OCI-LY7 (cell line): ENCODE measurements at regions of chr12 and their contacts with region 1.

Region 1: GRCh38 chr12:92561543-92561899 is 141.3 kb upstream of the PLEKHG7 start:
- DNase-seq: no peak
- H3K4me3 ChIP-seq: no peak overlapping the region
- H3K27ac ChIP-seq: no peak overlapping the region
- H3K4me1 ChIP-seq: peaks cover 10% of the 10 kb centered on the region
- CTCF ChIP-seq: no peak

Region 2: DNA sequence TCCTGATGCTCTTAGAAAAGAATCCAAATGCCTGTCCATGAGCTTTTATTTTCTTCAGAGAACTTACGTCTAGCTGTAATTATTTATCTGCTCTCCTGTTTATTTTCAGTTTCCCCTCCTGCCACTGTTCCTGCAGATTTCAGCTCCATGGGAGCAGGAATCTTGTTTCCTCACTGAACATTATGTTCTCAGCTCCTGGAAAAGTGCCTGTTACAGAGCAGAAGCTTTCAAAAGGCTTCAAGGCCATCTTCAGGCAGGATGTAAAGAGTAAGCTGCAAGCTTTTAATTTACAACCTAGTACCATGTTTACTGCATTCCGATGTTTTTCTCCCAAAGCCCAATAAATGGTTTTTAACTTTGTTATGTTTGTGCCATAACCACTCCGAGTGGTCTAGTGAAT is 317.5 kb before region 1 on chr12:
- CTCF ChIA-PET with region 1: no interaction called
- POLR2A ChIA-PET with region 1: no interaction called
- intact Hi-C with region 1: no loop called
- DNase-seq: no peak
- H3K4me3 ChIP-seq: no peak overlapping the region
- H3K27ac ChIP-seq: no peak overlapping the region
- H3K4me1 ChIP-seq: no peaks in the 10 kb centered on the region
- CTCF ChIP-seq: no peak

Region 3: GRCh38 chr12:92485351-92486348 is 75.9 kb before region 1 on chr12:
- CTCF ChIA-PET with region 1: no interaction called
- POLR2A ChIA-PET with region 1: interaction called, 10 read pairs
- intact Hi-C with region 1: no loop called
- DNase-seq: no peak
- H3K4me3 ChIP-seq: no peak overlapping the region
- H3K27ac ChIP-seq: peak overlapping the region; percentile 26
- H3K4me1 ChIP-seq: peaks cover 45% of the 10 kb centered on the region
- CTCF ChIP-seq: 0 out of 2 replicates have a peak, but pooled peaks have one; percentile 9

Region 4: GRCh38 chr12:92546635-92547348 is 14.7 kb before region 1 on chr12:
- CTCF ChIA-PET with region 1: interaction called, 3 read pairs
- POLR2A ChIA-PET with region 1: interaction called, 19 read pairs
- intact Hi-C with region 1: no loop called
- DNase-seq: peak; percentile 42
- H3K4me3 ChIP-seq: peak overlapping the region; percentile 5
- H3K27ac ChIP-seq: peak overlapping the region; percentile 8
- H3K4me1 ChIP-seq: peaks cover 47% of the 10 kb centered on the region
- CTCF ChIP-seq: no peak

Region 5: DNA sequence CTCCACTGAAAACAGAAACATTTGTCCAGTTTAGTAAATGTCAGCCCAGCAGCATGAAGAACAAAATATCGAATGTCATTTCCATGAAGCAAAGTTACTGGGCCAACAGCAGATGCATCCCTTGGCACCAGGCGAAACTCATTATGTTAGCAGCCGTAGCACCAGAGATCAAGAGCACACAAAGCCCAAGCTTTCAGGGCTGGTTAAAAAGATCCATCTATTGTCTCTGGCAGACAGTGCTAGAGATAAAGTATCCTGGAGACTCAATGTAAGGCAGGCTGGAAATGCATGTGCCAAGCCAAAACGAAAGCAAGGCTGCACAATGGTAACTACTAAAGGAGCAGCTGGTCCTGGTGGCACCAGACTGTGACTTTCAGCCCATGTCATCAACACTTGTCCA is 21.0 kb after region 1 on chr12:
- CTCF ChIA-PET with region 1: no interaction called
- POLR2A ChIA-PET with region 1: no interaction called
- intact Hi-C with region 1: no loop called
- DNase-seq: no peak
- H3K4me3 ChIP-seq: no peak overlapping the region
- H3K27ac ChIP-seq: no peak overlapping the region
- H3K4me1 ChIP-seq: peaks cover 16% of the 10 kb centered on the region
- CTCF ChIP-seq: no peak

Region 6: GRCh38 chr12:92735131-92735721 is 173.7 kb after region 1 on chr12:
- CTCF ChIA-PET with region 1: no interaction called
- POLR2A ChIA-PET with region 1: no interaction called
- intact Hi-C with region 1: no loop called
- DNase-seq: no peak
- H3K4me3 ChIP-seq: no peak overlapping the region
- H3K27ac ChIP-seq: no peak overlapping the region
- H3K4me1 ChIP-seq: no peaks in the 10 kb centered on the region
- CTCF ChIP-seq: 0 out of 2 replicates have a peak, but pooled peaks have one; percentile 22